Astrocyte of the cerebellum (primary cell): ENCODE measurements at regions of chr13 and their contacts with region 1.

Region 1: DNA sequence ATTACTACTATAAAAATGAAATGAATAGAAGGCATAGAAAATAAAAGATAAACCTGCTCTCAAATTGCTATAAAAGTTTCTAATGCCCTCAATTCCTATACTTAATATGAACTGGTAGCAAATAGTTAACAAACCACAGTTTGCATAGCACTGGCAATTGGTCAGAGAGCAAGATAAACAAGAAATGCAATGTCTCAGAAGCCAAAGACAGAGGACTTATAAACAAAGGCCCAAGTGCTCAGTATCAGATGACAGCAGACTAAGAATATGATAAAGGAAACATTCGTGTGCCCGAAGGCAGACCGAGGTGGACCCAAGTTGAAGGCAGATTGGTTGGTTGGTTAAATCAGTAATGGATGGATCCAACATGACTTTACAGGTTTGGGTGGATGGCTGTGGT is 50.6 kb downstream of the IPO5 start:
- DNase-seq: peak; percentile 19
- H3K4me3 ChIP-seq: no peak overlapping the region
- CTCF ChIP-seq: no peak

Region 2: GRCh38 chr13:98083507-98083906 is 79.4 kb after region 1 on chr13:
- in situ Hi-C with region 1: loop called (anchors 10 kb)
- DNase-seq: peak; percentile 85
- H3K4me3 ChIP-seq: no peak overlapping the region
- CTCF ChIP-seq: no peak